Activated CD4-positive, alpha-beta memory T cell treated with anti-CD3 and anti-CD28 coated beads, Interleukin-2, amount 10 ng/mL, durations not matched to agents 7 days and 5 days (primary cell): ENCODE measurements at regions of chr14 and their contacts with region 1.

Region 1: DNA sequence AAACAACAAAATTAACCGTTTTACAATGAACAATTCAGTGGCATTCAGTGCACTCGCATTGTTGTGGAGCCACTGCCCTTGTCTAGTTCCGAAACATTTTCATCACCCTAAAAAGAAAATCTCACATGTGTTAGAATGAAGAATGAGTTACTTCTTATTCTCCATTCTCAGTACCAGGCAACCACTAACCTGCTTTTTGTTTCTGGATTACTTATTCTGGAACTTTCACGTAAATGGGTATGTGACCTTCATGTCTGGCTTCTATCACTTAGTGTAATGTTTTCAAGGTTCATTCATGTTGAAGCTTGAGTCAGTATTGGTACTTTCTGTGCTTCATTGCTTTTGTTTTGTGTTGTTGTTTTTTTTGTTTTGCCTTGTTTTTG is 15.6 kb downstream of the RCOR1 start:
- DNase-seq: no peak
- H3K4me3 Mint-ChIP-seq: no peak overlapping the region
- H3K27ac Mint-ChIP-seq: no peak overlapping the region
- H3K4me1 Mint-ChIP-seq: peaks cover 23% of the 10 kb centered on the region
- H3K27me3 Mint-ChIP-seq: no peaks in the 10 kb centered on the region

Region 2: DNA sequence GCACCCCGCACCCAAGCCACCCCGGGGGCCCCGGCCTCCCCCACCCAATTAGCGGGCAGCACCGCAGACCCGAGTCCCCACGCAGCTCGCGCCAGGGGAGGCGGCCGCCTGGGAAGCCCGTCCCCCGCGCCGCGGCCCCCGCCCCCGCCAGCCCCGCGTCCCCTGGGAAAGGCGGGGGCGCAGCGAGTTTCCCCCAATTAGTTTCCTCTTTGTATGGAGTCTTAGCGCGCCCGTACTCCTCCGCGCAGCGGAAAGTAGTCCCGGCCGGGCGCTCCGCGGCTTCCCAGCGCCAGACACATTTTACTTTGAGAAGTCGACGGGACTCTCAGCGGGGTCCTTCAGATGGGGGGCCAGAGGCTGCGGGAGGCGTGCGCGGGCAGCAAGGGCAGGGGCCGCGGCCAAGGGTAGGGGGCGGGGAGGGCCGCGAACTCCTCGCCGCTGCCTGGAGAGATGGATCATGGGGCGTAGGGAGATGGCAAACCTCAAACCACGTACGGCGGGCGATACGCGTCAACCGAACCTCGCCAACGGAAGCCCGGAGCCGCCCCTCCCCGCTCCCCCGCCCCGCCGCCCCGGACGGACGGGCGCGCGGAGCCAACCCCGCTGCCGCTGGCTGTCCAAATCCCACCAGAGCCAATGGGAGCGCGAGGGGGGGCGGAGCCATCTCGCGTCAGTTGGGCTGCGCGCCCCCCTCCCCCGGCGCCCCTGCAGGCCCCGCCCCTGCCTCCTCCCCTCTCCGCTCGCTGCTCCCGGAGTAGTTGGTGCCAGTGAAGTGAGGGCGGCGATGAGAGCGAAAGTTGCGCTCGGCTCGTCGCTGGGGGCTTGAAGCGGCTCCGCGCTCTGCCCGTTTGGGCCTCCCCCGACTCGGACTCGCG is 15.9 kb before region 1 on chr14 and contains the start of gene RCOR1:
- CTCF ChIA-PET with region 1: interaction called, 24 read pairs
- POLR2A ChIA-PET with region 1: interaction called, 4 read pairs
- DNase-seq: peak; percentile 98
- H3K4me3 Mint-ChIP-seq: peak within 1 kb of the TSS; percentile 91
- H3K27ac Mint-ChIP-seq: peak within 1 kb of the TSS; percentile 88
- H3K4me1 Mint-ChIP-seq: peaks cover 24% of the 10 kb centered on the region
- H3K27me3 Mint-ChIP-seq: no peaks in the 10 kb centered on the region
- total RNA-seq, gene RCOR1: 22.1 to 23.4 TPM